ENCODE measurements at regions of chr6 and their contacts with region 1.

Region 1: GRCh38 chr6:99868074-99868702 is 125.8 kb downstream of the MCHR2 start:
- DNase-seq: peak; percentile 48
- H3K4me3 Mint-ChIP-seq: no peak overlapping the region
- H3K27ac Mint-ChIP-seq: no peak overlapping the region
- H3K4me1 Mint-ChIP-seq: peaks cover 3% of the 10 kb centered on the region
- H3K27me3 Mint-ChIP-seq: peaks cover 27% of the 10 kb centered on the region

Region 2: DNA sequence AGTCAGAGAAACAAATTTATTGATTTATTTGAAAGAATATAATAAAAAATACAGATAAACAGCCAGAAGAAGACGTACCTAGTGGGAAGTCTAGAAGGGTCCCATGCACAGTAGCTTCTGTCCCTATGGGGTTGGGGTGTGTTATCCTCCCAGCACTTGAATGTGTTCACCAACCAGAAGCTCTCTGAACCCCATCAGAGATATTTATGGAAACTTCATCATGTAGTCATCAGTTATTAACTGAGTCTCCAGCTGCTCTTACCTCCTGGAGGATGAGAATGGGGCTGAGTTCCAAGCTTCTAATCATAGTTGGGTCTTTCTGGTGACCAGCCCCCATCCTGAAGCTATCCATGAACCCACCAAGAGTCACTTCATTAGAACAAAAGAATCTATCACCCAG is 337.6 kb before region 1 on chr6:
- intact Hi-C with region 1: no loop called
- DNase-seq: no peak
- H3K4me3 Mint-ChIP-seq: no peak overlapping the region
- H3K27ac Mint-ChIP-seq: no peak overlapping the region
- H3K4me1 Mint-ChIP-seq: no peaks in the 10 kb centered on the region
- H3K27me3 Mint-ChIP-seq: no peaks in the 10 kb centered on the region

Region 3: DNA sequence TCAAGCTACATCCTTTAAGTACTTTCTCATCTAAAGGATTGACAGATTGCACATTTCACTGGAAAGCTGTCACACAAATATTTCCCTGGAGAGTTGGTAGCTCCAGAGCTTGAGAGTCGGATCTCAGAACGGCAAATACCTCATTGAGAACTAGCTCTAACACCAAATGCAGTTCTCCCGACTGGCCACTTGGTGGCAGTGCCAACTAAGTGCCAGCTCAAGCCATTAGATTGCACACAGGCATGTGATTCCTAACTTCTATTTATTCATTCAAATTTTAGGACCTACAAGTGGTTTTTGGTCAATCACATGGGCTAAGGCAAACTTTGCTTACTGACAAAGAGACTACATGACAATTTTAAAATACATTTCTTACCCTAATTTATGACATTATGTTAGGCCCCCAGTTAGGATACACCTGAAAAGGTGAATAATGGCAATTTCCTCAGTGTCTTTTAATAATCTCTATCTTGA is 133.8 kb after region 1 on chr6:
- intact Hi-C with region 1: loop called (anchors 5 kb)
- DNase-seq: no peak
- H3K4me3 Mint-ChIP-seq: no peak overlapping the region
- H3K27ac Mint-ChIP-seq: no peak overlapping the region
- H3K4me1 Mint-ChIP-seq: no peaks in the 10 kb centered on the region
- H3K27me3 Mint-ChIP-seq: peaks cover 17% of the 10 kb centered on the region

Region 4: DNA sequence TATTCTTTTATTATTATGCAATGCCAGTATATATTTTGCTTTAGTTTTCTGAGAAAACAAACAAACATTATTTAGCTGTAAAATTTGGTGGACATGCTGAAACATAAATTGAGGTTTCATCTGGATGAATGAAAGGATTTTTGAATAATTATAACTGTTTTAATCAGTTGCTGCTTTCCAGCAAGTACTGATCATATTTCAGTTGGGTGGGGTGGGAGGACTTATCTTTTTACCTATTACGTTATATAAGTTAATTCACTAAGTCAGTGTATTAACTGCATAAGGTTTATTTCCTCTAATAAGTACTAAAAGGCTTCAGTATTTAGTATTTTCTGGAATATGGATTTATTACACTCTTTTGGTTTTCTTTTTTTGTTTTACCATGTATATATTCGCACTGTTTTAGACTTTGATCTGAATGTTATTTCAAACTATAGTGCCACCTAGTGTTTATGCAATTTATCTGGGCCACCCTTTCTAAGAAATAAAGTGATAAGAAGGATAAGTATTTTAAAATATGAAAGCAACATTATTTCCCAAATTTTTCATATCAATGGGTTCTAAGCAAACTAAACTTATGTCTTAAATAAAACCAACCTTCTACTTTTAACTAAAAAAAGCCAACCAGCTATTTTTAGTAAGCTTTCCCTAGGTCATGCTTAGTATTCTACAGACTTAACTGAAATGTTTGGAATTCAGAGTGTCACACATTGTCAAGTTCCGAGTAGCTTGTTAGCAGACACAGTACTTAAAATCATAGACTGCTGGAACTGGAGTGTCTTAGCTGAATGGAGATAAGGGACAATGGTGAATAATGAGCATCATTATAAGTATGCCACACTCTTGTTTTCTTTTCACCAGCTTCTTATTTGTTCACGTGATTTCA is 231.2 kb after region 1 on chr6:
- intact Hi-C with region 1: loop called (anchors 1 kb)
- DNase-seq: no peak
- H3K4me3 Mint-ChIP-seq: no peak overlapping the region
- H3K27ac Mint-ChIP-seq: no peak overlapping the region
- H3K4me1 Mint-ChIP-seq: no peaks in the 10 kb centered on the region
- H3K27me3 Mint-ChIP-seq: peaks cover 16% of the 10 kb centered on the region

Region 5: GRCh38 chr6:100435299-100435698 is 567.1 kb after region 1 on chr6:
- intact Hi-C with region 1: no loop called
- DNase-seq: no peak
- H3K4me3 Mint-ChIP-seq: no peak overlapping the region
- H3K27ac Mint-ChIP-seq: no peak overlapping the region
- H3K4me1 Mint-ChIP-seq: no peaks in the 10 kb centered on the region
- H3K27me3 Mint-ChIP-seq: peaks cover 29% of the 10 kb centered on the region

Measured in activated T-helper 2 cell treated with anti-CD3 and anti-CD28 coated beads, Interferon-gamma antibody, Interleukin-2, Interleukin-4, amounts not matched to agents 10 μg/mL and 5 μg/mL and 100 μg/mL, durations not matched to agents 14 hours and 24 hours and 36 hours (primary cell).